MCF 10A (cell line): ENCODE measurements at regions of chr4 and their contacts with region 1.

Region 1: GRCh38 chr4:44425614-44426208 is 22.9 kb downstream of the KCTD8 start:
- DNase-seq: peak; percentile 67
- H3K4me3 Mint-ChIP-seq: no peak overlapping the region
- H3K27ac Mint-ChIP-seq: no peak overlapping the region
- H3K4me1 Mint-ChIP-seq: no peaks in the 10 kb centered on the region
- H3K27me3 Mint-ChIP-seq: no peaks in the 10 kb centered on the region
- CTCF ChIP-seq: peak; percentile 71

Region 2: DNA sequence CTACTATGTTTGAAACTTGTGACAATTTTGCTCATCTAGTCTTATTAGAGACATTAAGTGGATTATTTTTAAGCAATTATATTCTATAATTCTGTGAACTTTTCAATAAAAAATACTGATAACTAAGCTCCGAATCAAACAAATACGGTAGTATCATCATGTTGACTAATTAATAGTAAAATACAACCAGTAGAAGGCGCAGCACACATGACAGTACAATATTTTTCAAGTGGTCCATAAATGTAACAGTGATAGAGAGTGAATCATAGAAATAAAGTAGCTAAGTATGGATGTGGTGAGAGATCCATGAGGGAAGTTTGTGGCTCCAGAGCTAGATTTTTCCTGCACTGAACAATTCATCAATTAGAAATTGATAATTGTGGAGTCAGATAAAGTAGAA is 643.3 kb before region 1 on chr4:
- CTCF ChIA-PET with region 1: interaction called, 18 read pairs
- POLR2A ChIA-PET with region 1: no interaction called
- intact Hi-C with region 1: loop called (anchors 1 kb)
- DNase-seq: no peak
- H3K4me3 Mint-ChIP-seq: no peak overlapping the region
- H3K27ac Mint-ChIP-seq: no peak overlapping the region
- H3K4me1 Mint-ChIP-seq: no peaks in the 10 kb centered on the region
- H3K27me3 Mint-ChIP-seq: no peaks in the 10 kb centered on the region
- CTCF ChIP-seq: no peak